ENCODE measurements at regions of chr7 and their contacts with region 1.

Region 1: DNA sequence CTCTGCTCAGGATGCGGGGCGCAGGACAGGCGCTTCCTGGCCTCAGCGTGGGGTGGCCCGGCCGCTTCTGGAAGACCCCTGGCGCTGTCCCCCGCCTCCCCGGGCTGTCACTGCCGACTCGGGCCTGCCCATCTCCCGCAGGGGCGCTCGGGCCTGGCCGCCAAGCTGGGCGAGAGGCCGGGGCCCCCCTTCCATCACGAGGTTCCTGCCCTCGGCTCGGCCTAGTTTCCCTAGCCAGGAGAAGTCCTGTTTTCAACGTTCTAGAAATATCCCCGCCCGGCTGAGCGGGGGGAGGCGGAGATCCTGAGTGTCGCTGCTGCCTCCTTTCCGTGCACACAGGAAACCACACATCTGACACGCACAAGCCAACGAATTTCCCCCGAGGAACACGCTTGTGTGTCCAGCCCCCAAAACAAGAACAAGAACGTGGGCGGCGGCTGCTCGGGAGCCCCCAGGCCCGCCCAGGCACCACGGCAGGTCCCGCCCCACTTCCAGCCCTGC is 33.7 kb downstream of the AP5Z1 start:
- DNase-seq: no peak
- H3K4me3 ChIP-seq: peak overlapping the region in 1 of 2 donors; percentile 39
- H3K27ac ChIP-seq: no peak overlapping the region
- H3K4me1 ChIP-seq: no peaks in the 10 kb centered on the region
- H3K27me3 ChIP-seq: no peaks in the 10 kb centered on the region
- CTCF ChIP-seq: no peak
- POLR2A ChIP-seq: no peak

Region 2: DNA sequence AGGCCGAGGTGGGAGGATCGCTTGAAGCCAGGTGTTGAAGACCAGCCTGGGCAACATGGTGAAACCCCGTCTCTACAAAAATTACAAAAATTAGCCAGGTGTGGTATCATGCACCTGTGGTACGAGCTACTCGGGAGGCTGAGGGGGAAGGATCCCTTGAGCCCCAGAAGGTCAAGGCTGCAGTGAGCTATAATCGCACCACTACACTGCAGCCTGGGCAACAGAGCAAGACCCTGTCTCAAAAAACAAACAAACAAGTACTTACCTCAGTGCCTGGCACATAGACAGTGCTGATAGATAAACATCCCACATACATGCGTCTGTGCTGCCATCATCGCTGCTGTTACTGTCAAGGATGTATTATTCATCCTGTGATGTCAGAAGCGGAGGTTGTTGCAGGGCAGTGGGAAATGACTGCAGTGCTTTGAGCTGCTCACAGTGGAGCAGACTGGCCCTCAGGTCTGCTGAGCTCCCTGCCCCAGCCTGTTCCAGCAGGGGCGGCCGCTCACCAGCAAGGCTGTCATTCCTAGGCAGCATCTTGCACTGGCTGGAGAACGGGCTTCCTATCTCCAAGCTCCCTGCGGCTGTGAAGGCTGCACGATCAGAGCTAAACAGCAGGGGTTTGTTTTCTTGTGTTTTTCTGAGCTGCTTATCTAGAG is 108.4 kb before region 1 on chr7:
- intact Hi-C with region 1: no loop called
- DNase-seq: peak; percentile 70
- H3K4me3 ChIP-seq: no peak overlapping the region
- H3K27ac ChIP-seq: peak overlapping the region; percentile 45 to 50
- H3K4me1 ChIP-seq: peaks cover 37% of the 10 kb centered on the region
- H3K27me3 ChIP-seq: no peaks in the 10 kb centered on the region
- CTCF ChIP-seq: no peak
- POLR2A ChIP-seq: no peak

Region 3: DNA sequence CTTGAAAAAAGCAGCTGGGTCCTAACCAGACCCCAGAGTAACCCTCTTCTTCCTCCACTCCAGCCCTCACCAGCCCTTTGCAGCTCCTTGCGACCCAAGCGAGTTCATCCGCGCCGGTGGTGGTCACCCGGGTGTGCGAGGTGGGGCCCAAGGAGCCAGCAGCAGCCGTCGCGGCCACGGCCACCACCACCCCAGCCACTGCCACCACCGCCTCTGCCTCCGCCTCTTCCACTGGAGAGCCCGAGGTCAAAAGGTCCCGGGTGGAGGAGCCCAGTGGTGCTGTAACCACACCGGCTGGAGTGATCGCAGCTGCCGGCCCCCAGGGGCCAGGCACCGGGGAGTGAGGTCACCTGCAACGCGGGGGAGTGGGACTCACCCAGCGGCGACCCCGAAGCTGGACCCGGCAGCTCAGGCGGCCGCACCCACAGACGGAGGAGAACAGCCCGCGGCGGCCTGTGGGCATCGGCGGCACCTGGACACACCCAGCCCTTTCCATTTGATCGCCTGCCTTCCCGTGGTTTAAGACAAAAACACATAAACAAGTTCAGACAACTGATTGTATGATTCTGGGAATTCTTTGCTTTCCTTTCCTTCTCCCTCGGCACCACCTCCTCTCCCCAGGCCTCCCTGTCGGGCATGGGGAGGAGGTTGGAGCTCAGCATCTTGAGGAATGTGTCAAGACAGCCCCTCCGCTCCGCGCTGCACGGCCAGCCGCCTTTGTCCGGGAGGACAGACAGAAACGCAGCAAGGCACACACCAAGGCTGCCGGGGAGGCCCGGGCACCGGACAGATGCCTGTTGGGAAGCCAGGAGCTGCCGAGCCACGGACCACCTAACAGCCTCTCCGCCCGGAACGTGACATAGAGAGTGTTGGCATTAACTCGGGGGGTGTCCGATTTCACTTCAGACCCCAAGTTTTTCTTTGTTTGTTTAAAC is 46.8 kb before region 1 on chr7:
- intact Hi-C with region 1: no loop called
- DNase-seq: no peak
- H3K4me3 ChIP-seq: no peak overlapping the region
- H3K27ac ChIP-seq: no peak overlapping the region
- H3K4me1 ChIP-seq: no peaks in the 10 kb centered on the region
- H3K27me3 ChIP-seq: no peaks in the 10 kb centered on the region
- CTCF ChIP-seq: no peak
- POLR2A ChIP-seq: no peak

Region 4: DNA sequence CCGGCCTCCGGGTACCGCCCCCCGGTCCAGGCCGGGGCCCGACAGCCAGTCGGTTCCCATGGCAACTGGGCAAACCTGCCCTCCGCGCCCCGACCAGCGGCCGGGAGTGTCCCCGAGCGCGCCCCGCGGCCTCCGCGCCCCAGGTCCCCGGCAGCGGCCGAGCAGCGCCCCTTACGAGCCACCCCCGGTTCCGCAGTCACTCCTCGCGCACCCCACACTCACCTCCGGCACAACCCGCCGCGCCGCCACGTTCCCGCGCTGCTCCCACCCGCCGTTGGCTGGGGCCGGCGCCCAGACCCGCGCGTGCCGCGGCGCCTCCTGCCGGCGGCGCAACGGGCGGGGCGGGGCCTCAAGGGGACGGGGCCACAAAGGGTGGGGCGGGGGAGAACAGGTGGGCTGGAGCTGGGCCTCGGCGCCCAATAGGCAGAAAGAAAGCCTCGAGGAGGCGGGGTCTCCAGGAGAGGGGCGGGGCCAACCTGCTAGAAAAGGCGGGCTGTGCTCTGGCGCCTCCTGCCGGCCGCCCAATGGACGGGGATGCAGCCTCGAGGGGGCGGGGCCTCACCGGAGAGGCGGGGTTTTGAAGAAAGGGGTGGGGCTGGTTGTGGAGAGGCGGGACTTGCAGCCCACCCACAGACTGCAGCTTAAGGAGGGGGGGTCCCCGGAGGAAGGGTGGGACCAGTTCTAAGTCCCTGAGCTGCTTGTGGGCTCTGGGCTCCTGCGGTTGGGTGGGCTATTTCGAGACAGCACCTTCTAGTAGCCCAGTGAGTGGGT is 74.4 kb after region 1 on chr7 and contains the start of gene RADIL:
- intact Hi-C with region 1: loop called (anchors 10 kb)
- DNase-seq: peak; percentile 97
- H3K4me3 ChIP-seq: peak within 1 kb of the TSS; percentile 61 to 65
- H3K27ac ChIP-seq: peak within 1 kb of the TSS; percentile 47 to 66
- H3K4me1 ChIP-seq: peaks cover 11% of the 10 kb centered on the region
- H3K27me3 ChIP-seq: no peaks in the 10 kb centered on the region
- CTCF ChIP-seq: peak; percentile 45 to 84 (median 65)
- POLR2A ChIP-seq: no peak
- total RNA-seq, gene RADIL: 24.3 to 25.6 TPM

Measured in testis (tissue), 5 donors.